MCF 10A (cell line): ENCODE measurements at regions of chr17 and their contacts with region 1.

Region 1: DNA sequence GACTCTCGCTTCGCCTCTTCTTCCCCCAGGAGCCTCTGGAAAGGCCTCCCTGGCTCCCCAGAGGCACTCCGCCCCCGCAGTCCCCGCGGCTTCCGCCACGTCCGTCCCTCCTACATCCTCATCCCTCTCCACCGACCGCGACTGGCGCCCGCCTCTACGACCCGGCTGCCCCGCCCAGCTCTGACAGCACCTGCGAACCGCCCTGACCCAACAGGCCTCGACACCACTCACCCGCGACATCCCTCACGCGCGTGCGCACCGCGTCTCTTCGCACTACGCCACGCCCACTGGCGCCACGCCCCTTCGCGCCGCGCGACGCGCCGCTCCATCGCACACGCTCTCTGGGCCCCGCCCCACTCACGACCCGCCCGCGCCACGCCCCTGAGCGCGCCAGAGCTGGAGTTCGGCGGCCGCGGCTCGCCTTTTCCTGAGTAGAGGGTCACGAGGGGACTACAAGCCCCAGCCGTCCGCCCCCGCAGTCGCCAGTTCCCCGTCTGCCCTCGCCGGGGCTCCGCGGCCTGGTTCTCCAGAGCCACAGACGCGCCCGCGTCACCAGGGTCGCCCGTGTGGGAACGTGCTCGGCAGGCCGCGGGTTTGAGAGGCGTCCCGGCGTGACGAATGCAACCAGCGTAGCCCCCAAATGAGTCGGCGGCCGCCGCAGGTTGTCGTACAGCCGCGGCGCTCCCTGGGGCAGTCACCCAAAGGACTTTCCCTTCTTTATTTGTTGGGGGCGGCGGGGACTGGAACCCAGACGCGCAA is 56.2 kb upstream of the LRRC37A3 start:
- DNase-seq: peak; percentile 93
- H3K4me3 Mint-ChIP-seq: peak overlapping the region; percentile 100
- H3K27ac Mint-ChIP-seq: peak overlapping the region; percentile 99
- H3K4me1 Mint-ChIP-seq: peaks cover 21% of the 10 kb centered on the region
- H3K27me3 Mint-ChIP-seq: no peaks in the 10 kb centered on the region
- CTCF ChIP-seq: no peak

Region 2: DNA sequence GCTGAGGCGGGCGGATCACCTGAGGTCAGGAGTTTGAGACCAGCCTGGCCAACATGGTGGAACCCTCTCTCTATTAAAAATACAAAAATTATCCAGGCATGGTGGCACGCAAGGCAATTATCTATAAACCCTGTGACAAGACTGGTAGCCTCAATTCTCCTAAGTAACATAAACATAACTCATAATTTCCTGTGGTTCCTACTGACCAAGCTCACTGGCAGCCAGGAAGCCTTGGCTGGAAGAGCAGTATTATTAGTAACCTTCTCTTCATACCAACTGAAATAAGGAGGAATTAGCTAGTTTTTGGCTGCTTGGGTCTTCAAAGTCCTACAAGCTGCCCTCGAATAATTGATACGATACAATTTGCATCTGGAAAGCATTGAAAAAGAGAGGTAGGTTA is 24.6 kb before region 1 on chr17:
- CTCF ChIA-PET with region 1: no interaction called
- POLR2A ChIA-PET with region 1: no interaction called
- intact Hi-C with region 1: no loop called
- DNase-seq: no peak
- H3K4me3 Mint-ChIP-seq: no peak overlapping the region
- H3K27ac Mint-ChIP-seq: no peak overlapping the region
- H3K4me1 Mint-ChIP-seq: no peaks in the 10 kb centered on the region
- H3K27me3 Mint-ChIP-seq: no peaks in the 10 kb centered on the region
- CTCF ChIP-seq: no peak

Region 3: DNA sequence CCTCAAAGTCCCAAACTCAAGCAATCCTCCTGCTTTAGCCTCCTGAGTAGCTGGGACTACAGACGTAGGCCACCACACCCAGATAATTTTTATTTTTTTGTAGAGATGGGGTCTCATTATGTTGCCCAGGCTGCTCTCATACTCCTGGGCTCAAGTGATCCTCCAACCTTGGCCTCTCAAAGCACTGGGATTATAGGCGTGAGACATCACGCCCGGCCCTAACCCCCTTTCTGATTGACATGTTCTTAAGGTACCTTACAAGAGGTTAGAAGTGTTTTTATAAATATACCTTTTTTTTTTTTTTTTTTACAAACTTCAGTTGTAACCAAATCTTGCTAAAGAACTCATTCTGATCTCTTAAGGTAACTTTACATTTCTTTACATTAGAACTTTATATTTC is 16.2 kb after region 1 on chr17:
- CTCF ChIA-PET with region 1: no interaction called
- POLR2A ChIA-PET with region 1: interaction called, 27 read pairs
- intact Hi-C with region 1: no loop called
- DNase-seq: no peak
- H3K4me3 Mint-ChIP-seq: no peak overlapping the region
- H3K27ac Mint-ChIP-seq: no peak overlapping the region
- H3K4me1 Mint-ChIP-seq: peaks cover 17% of the 10 kb centered on the region
- H3K27me3 Mint-ChIP-seq: no peaks in the 10 kb centered on the region
- CTCF ChIP-seq: no peak

Region 4: DNA sequence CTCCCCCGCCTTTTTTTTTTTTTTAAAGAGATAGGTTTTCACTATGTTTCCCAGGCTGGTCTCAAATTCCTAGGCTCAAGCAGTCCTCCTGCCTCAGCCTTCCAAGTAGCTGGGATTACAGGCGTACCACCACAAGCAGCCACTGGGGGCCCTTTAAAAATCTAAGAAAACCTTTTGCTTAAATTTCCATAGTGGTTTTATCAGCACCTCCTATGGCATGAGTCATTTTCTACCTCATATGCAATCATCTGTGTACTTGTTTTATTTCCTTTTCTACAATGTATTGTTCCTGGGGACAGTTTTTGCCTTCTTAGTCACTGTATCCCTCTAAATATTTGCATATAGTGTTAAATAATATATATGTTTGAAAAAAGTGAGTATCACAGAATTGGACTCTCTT is 51.8 kb after region 1 on chr17:
- CTCF ChIA-PET with region 1: interaction called, 3 read pairs
- POLR2A ChIA-PET with region 1: interaction called, 74 read pairs
- intact Hi-C with region 1: loop called (anchors 2 kb)
- DNase-seq: peak; percentile 72
- H3K4me3 Mint-ChIP-seq: no peak overlapping the region
- H3K27ac Mint-ChIP-seq: peak overlapping the region; percentile 42
- H3K4me1 Mint-ChIP-seq: peaks cover 38% of the 10 kb centered on the region
- H3K27me3 Mint-ChIP-seq: no peaks in the 10 kb centered on the region
- CTCF ChIP-seq: peak; percentile 36

Region 5: GRCh38 chr17:65055348-65056261 is 80.1 kb after region 1 on chr17:
- CTCF ChIA-PET with region 1: no interaction called
- POLR2A ChIA-PET with region 1: interaction called, 103 read pairs
- intact Hi-C with region 1: no loop called
- DNase-seq: peak; percentile 55
- H3K4me3 Mint-ChIP-seq: peak overlapping the region; percentile 89
- H3K27ac Mint-ChIP-seq: peak overlapping the region; percentile 72
- H3K4me1 Mint-ChIP-seq: peaks cover 31% of the 10 kb centered on the region
- H3K27me3 Mint-ChIP-seq: no peaks in the 10 kb centered on the region
- CTCF ChIP-seq: no peak

Region 6: DNA sequence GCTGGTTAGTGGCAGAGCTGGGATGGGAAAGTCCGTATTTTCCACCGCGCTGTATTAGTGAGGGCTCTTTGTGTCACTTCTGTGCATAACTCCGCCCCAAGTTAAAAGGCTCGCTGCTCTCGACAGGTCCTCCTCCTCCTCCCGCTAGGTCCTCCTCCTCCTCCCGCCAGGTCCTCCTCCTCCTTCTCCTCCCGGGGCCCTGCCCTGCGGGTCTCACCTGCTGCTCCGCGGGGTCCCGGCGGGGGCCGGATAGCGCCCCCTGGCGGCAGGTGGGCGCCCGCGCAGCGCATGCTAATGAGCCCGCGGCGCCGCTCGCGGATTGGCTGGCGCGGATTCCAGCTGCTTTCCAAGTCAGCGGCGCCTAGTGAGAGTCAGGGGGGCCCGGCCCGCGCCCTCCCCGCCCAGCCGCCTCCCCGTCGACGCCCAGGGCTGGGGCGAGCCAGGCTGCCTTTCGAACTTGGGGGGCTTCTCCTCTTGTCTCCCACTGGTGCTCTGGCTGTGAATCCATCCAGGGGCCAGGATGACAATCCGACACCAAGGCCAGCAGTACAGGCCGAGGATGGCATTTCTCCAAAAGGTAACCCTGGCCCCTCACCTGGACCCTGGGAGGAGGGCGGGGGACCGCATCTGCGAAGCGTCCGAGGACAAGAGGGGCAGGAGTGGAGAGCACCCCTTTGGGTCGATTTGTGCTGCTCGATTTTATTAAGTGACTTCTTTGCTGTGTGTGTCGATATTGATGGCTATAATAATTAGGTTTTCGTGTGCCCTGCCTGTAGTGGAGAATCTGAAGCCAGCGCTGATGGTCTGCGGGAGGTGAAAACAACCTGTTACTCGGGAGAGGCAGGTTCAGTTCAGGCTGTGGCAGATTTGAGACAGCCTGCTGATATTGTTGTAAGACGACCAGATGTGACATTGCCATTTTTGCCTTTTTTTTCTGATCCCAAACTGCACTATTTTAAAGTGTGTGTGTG is 161.8 kb after region 1 on chr17 and contains the start of gene RGS9:
- CTCF ChIA-PET with region 1: interaction called, 3 read pairs
- POLR2A ChIA-PET with region 1: interaction called, 10 read pairs
- intact Hi-C with region 1: no loop called
- DNase-seq: peak; percentile 75
- H3K4me3 Mint-ChIP-seq: peak within 1 kb of the TSS; percentile 74
- H3K27ac Mint-ChIP-seq: no peak within 1 kb of the TSS
- H3K4me1 Mint-ChIP-seq: peaks cover 11% of the 10 kb centered on the region
- H3K27me3 Mint-ChIP-seq: peaks cover 31% of the 10 kb centered on the region
- CTCF ChIP-seq: peak; percentile 94
- total RNA-seq, gene RGS9: 0.49 and 0.61 TPM in 2 replicates

Region 7: DNA sequence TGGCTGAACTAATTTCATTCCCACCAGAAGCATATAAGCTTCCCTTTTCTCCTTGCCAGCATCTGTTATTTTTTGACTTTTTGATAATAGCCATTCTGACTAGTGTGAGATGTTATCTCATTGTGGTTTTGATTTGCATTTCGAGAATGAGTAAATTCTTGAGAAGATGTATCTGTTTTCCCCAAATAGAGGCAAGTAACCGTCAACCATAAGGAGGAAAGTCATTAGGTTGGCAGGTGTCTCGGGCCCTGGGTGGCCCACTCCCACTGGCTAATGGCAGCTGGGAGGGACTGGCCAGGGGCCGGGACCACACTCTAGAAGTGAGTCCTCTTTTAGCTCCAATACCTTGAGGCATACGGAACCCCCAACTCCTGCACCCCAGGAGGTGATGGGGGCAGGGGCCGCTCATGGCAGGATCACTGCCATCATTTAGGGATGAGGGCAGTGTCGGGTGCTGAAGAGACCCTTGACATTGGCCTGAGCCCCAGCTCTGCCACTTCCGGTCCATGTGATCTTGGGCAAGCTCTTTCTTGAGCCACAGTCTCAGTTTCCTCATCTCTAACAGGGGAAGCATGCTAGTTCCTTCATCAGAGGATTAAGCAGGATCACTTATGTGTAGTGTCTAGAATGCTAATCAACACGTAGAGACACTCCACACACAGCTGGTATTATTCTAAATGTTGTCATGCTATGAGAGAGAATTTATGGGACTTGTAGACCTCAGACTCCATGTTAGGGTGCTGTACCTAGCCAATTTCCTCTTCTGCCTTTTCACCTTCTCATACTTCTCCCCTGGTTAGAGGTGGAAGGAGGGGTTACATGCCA is 205.9 kb after region 1 on chr17:
- CTCF ChIA-PET with region 1: no interaction called
- POLR2A ChIA-PET with region 1: no interaction called
- intact Hi-C with region 1: no loop called
- DNase-seq: no peak
- H3K4me3 Mint-ChIP-seq: no peak overlapping the region
- H3K27ac Mint-ChIP-seq: no peak overlapping the region
- H3K4me1 Mint-ChIP-seq: peaks cover 6% of the 10 kb centered on the region
- H3K27me3 Mint-ChIP-seq: peaks cover 15% of the 10 kb centered on the region
- CTCF ChIP-seq: no peak